ENCODE measurements at regions of chr12 and their contacts with region 1.

Region 1: DNA sequence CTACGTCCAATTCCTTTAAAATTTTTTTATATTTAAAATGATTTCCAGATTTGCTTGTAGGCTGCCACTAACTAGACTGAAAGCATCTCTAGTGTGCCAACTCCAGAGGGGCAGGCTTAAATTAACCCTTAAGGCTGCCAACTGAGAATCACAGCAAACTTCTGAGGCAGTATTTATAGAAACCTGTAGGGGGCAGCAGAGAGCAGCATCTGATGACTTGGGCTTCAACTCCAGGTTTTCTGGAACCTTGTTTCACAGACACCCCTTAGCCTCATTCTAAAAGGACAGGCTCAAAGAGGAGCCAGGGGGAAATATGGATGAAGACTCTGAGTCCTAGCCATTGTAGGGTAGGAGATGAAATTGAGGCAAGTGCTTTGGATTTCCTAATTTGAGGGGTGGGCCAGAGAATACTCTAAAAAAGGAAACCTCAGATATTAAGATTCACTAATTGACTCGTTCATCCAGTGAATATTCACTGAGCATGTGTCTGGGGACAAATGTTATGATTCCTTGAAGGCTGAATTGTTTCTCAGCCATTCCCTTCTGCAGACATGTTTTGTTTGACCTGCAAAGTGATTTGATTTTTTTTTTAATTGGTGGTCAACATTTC is 63.3 kb upstream of the HSPB8 start:
- DNase-seq: no peak
- ATAC-seq: peak; percentile 56

Region 2: DNA sequence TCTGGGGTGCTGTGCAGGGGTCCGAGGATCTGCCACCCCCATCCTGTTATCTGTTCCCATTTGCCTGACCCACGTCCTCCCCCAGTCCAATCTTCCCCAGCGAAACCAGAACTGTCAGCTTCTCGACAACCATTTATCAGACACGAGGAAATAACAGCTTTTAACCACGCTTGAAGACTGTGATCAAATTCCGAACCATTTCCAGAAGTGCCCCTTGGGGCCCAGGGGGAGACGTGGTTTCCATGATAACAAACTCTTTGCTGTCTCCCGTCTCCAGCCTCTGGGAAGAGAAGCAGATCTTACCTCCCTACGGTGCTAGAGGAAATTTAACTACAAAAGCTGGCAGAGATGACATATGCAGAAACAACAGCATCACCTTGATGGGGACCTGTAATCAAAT is 169.1 kb before region 1 on chr12:
- intact Hi-C with region 1: no loop called
- DNase-seq: no peak
- ATAC-seq: no peak

Region 3: DNA sequence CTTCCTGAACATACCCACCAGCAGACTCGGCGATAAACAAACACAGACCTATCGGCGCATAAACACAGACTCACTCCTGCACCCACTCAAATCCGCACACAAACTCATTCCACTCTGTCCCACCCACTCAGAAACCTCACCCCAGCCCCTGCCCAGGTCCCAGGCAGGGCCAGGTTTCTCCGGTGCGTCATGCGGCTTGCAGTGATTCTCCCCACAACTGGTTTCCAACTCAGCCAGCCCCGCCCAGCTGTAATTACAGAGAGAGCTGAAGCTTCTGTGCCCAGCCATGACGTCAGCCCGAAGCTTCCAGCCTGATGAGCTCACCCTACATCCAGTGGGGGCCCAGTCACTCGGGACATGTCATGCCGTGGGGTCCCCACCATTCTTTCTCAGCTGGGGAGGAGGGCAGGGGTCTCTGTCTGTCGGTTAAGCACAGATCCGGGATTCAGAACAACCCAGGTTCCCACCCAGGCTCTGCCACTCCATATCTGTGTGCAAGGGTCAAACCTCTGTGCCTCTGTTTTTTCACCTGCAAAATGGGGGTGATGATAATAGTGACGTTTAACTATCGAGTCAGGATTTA is 61.0 kb after region 1 on chr12:
- intact Hi-C with region 1: loop called (anchors 5 kb)
- DNase-seq: peak; percentile 92
- ATAC-seq: peak; percentile 63

Region 4: GRCh38 chr12:119249326-119250155 is 134.1 kb after region 1 on chr12:
- intact Hi-C with region 1: loop called (anchors 5 kb)
- DNase-seq: no peak
- ATAC-seq: no peak

Region 5: DNA sequence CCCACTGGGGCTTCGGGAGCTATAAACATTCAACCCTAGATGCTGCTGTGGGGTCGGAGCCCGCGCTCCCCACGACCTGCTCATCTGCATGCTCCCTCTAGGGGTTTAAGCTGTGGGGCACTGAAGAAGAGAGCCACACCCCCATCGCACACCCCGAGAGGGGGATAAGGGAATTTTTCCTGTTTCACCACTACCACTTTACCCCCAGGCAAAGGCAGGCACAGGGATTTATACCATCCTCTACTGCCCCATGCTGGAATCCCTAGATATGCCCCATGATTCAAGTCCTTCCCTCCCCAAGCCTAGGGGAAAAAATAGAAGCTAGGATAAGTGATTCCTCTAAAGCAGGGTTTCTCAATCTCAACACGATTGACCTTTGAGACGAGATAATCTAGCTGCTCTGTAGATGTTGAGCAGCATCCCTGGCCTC is 159.2 kb after region 1 on chr12:
- intact Hi-C with region 1: loop called (anchors 5 kb)
- DNase-seq: no peak
- ATAC-seq: peak; percentile 56

Region 6: GRCh38 chr12:119412811-119413794 is 297.7 kb after region 1 on chr12:
- intact Hi-C with region 1: loop called (anchors 1 kb)
- DNase-seq: no peak
- ATAC-seq: peak; percentile 38

Region 7: DNA sequence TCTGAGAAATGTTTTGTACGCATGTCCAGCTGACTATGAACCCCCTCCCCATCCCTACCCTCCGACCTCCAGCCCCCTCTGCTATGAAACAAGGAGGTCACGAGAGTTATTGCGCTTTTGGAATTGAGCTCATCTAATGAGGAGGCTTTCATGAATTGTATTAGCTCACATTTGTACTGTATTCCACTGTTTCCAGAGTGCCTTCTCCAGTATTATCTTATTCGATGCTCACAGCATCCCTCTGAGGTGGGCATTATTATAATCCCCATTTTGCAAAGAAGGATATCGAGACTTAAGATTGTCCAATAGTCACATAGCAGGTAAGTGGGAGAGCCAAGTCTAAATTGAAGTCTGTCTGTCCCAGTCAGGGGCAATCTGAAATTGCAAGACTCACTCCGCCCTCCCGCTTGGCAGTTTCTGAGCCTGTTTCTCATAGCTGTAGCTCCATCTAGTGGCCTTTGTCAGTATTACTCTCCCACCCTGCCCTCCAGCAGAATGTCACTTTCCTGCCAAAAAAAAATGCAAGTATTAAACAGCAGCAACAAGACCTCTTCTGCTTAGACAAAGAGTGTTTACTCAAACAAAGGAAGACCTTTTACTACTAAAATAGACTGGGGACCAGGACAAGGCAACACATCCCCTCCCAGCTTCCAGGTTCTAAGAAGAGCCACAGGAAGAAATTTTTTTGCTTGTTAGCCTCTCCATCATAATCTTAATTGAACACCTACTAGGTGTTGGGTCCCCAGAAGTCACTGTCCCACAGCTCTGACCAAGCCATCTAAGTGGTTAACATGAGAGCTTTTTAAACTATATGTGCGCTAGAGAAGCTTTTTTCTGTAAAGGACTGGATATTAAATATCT is 429.6 kb after region 1 on chr12:
- intact Hi-C with region 1: loop called (anchors 5 kb)
- DNase-seq: no peak
- ATAC-seq: peak; percentile 59

Measured in Right ventricle myocardium inferior (tissue), 1 donor.